ENCODE measurements at regions of chr10 and their contacts with region 1.

Region 1: DNA sequence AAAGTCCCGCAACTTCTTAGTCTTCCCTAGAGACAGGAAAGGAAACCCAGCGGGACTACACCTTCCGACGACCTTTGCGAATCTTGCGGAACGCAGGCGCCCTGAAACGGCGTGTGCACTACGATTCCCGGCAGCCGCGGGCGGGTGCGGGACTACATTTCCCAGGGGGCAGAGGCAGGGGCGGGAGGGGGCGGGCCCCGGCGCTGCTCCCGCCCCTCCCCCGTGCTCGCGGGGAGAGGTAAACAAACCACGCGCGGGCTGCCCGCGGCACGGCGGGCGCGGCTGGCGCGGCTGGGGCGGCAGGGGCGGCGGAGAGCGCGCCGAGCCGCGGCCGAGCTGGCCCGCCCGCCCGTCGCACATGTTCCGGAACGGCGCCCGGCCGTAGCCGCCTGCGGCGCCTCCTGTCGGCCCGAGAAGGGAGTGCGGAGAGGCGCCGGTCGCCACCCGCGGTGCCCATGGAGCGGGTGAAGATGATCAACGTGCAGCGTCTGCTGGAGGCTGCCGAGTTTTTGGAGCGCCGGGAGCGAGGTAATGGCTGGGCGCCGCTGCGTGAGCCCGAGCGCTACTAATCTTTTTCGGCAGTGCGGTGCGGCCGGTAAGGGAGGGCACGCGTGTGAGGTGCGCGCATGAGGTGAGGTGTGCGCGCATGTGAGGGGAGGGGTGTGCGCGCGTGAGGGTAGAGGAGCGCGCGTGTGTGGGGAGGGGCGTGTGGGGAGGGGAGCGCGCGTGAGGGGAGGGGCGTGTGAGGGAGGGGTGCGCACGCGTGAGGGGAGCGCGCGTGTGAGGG is 18.5 kb downstream of the MXI1 start:
- DNase-seq: peak; percentile 93
- H3K4me3 ChIP-seq: peak overlapping the region; percentile 66 to 79 (median 72)
- H3K27ac ChIP-seq: peak overlapping the region; percentile 83 to 99 (median 97)
- H3K4me1 ChIP-seq: peaks cover 9 to 50% (median 18%) of the 10 kb centered on the region in 4 donors
- H3K27me3 ChIP-seq: no peaks in the 10 kb centered on the region
- CTCF ChIP-seq: peak; percentile 69 to 87 (median 73)
- EP300 ChIP-seq: no peak
- POLR2A ChIP-seq: peak; percentile 36

Region 2: DNA sequence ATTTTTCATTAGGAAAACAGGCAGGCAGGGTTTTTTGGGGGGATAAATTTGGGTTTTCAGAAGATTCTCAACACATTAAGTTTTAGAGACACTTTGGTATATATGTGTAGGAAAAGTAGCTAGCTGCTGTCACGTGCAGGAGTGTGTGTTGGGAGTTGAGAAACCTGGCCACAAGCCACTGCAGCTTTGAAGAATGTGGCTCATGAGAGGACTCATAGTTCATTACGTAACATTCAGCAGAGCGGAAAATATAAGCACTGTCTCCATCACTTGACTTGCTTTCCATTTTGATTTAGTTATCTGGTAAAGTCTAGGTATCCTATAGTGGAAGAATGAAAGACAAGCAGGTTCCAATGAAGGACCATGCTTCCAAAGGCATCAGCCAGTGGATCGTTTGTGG is 47.5 kb after region 1 on chr10:
- in situ Hi-C with region 1: no loop called
- intact Hi-C with region 1: loop called (anchors 5 kb)
- DNase-seq: peak; percentile 56
- H3K4me3 ChIP-seq: no peak overlapping the region
- H3K27ac ChIP-seq: peak overlapping the region in 3 of 4 donors; percentile 14 to 54 (median 44)
- H3K4me1 ChIP-seq: peaks cover 9 to 36% (median 29%) of the 10 kb centered on the region in 4 donors
- H3K27me3 ChIP-seq: no peaks in the 10 kb centered on the region
- CTCF ChIP-seq: no peak
- EP300 ChIP-seq: no peak
- POLR2A ChIP-seq: no peak

Measured in transverse colon (tissue), 4 donors.